ENCODE measurements at regions of chr16 and their contacts with region 1.

Region 1: GRCh38 chr16:53822936-53823529 is 119.1 kb downstream of the FTO start:
- DNase-seq: peak in 29 of 35 experiments; percentile 0 to 49 (median 18)
- ATAC-seq: peak; percentile 93 to 99 (median 97)
- H3K4me3 ChIP-seq: no peak overlapping the region
- H3K4me3 Mint-ChIP-seq: no peak overlapping the region
- H3K27ac ChIP-seq: no peak overlapping the region
- H3K27ac Mint-ChIP-seq: no peak overlapping the region
- H3K4me1 ChIP-seq: peaks cover 6 to 12% of the 10 kb centered on the region in 2 experiments
- H3K4me1 Mint-ChIP-seq: peaks cover 6 to 14% (median 13%) of the 10 kb centered on the region in 3 donors
- H3K27me3 ChIP-seq: no peaks in the 10 kb centered on the region
- H3K27me3 Mint-ChIP-seq: no peaks in the 10 kb centered on the region

Region 2: DNA sequence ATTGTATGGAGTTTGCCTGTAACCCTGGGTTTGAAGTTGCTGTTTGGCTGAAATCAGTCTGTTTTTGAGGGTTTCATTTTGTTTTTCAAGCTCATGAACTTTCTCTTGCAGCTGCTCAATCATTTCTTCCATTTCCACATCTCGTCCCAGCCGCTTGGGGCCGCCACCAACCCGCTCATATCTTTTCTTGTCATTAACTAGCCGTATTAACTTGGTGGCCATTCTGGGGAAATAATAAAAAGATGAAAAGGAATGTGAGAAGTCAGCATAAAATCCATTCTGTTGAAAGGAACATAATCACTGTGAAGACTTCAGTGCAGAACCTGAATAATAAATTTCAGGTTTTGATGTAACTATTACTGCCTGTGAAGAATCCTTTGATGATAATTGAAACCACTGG is 130.9 kb before region 1 on chr16:
- CTCF ChIA-PET with region 1: interaction called in 1 of 2 experiments, 10 read pairs
- POLR2A ChIA-PET with region 1: no interaction called
- DNase-seq: no peak
- ATAC-seq: no peak
- H3K4me3 ChIP-seq: no peak overlapping the region
- H3K4me3 Mint-ChIP-seq: no peak overlapping the region
- H3K27ac ChIP-seq: no peak overlapping the region
- H3K27ac Mint-ChIP-seq: no peak overlapping the region
- H3K4me1 ChIP-seq: no peaks in the 10 kb centered on the region
- H3K4me1 Mint-ChIP-seq: no peaks in the 10 kb centered on the region
- H3K27me3 ChIP-seq: no peaks in the 10 kb centered on the region
- H3K27me3 Mint-ChIP-seq: no peaks in the 10 kb centered on the region

Region 3: GRCh38 chr16:53743149-53743566 is 79.9 kb before region 1 on chr16:
- CTCF ChIA-PET with region 1: interaction called, 5 to 15 read pairs
- POLR2A ChIA-PET with region 1: interaction called in 1 of 2 experiments, 3 read pairs
- DNase-seq: peak in 9 of 35 experiments; percentile 0 to 37 (median 8)
- ATAC-seq: no peak
- H3K4me3 ChIP-seq: no peak overlapping the region
- H3K4me3 Mint-ChIP-seq: no peak overlapping the region
- H3K27ac ChIP-seq: no peak overlapping the region
- H3K27ac Mint-ChIP-seq: no peak overlapping the region
- H3K4me1 ChIP-seq: peaks cover 2 to 16% of the 10 kb centered on the region in 2 experiments
- H3K4me1 Mint-ChIP-seq: peaks cover 33 to 48% (median 47%) of the 10 kb centered on the region in 3 donors
- H3K27me3 ChIP-seq: no peaks in the 10 kb centered on the region
- H3K27me3 Mint-ChIP-seq: no peaks in the 10 kb centered on the region